ENCODE measurements at regions of chr6 and their contacts with region 1.

Region 1: DNA sequence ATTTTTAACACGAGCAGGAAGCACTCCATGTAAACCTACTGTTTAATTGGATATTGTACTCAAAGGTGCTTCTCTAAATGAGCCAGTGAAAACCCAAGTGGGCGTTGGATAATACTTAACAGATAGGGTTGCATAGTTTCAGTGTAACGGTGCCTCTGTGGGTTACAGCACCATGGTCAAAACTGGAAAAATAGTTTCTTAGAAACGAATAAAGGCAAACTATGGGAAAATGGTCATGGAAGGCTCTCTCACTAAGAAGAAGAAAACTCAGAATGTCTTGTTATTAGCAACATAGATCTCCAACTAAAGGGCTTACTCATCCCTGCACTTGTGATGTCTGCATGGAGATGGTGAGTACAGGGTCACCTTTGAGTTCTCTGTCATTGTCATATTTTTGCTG is 59.1 kb upstream of the NEDD9 start:
- DNase-seq: no peak
- ATAC-seq: no peak
- H3K4me3 ChIP-seq: no peak overlapping the region
- H3K4me3 Mint-ChIP-seq: no peak overlapping the region
- H3K27ac ChIP-seq: no peak overlapping the region
- H3K27ac Mint-ChIP-seq: no peak overlapping the region
- H3K4me1 ChIP-seq: peaks cover 0 to 7% of the 10 kb centered on the region in 2 experiments
- H3K4me1 Mint-ChIP-seq: peaks cover 4 to 21% (median 15%) of the 10 kb centered on the region in 3 donors
- H3K27me3 ChIP-seq: no peaks in the 10 kb centered on the region
- H3K27me3 Mint-ChIP-seq: no peaks in the 10 kb centered on the region

Region 2: GRCh38 chr6:11448038-11448437 is 156.5 kb after region 1 on chr6:
- CTCF ChIA-PET with region 1: interaction called in 1 of 2 experiments, 10 read pairs
- POLR2A ChIA-PET with region 1: no interaction called
- DNase-seq: no peak
- ATAC-seq: no peak
- H3K4me3 ChIP-seq: no peak overlapping the region
- H3K4me3 Mint-ChIP-seq: no peak overlapping the region
- H3K27ac ChIP-seq: no peak overlapping the region
- H3K27ac Mint-ChIP-seq: no peak overlapping the region
- H3K4me1 ChIP-seq: no peaks in the 10 kb centered on the region
- H3K4me1 Mint-ChIP-seq: peaks cover 0 to 2% (median 0%) of the 10 kb centered on the region in 3 donors
- H3K27me3 ChIP-seq: peaks cover 0 to 4% of the 10 kb centered on the region in 2 experiments
- H3K27me3 Mint-ChIP-seq: peaks cover 0 to 6% of the 10 kb centered on the region in 2 donors

Region 3: GRCh38 chr6:11618533-11618932 is 327.0 kb after region 1 on chr6:
- CTCF ChIA-PET with region 1: no interaction called
- POLR2A ChIA-PET with region 1: no interaction called
- DNase-seq: peak in 1 of 35 experiments; percentile 5
- ATAC-seq: no peak
- H3K4me3 ChIP-seq: no peak overlapping the region
- H3K4me3 Mint-ChIP-seq: no peak overlapping the region
- H3K27ac ChIP-seq: no peak overlapping the region
- H3K27ac Mint-ChIP-seq: no peak overlapping the region
- H3K4me1 ChIP-seq: no peaks in the 10 kb centered on the region
- H3K4me1 Mint-ChIP-seq: no peaks in the 10 kb centered on the region
- H3K27me3 ChIP-seq: no peaks in the 10 kb centered on the region
- H3K27me3 Mint-ChIP-seq: peaks cover 0 to 2% of the 10 kb centered on the region in 2 donors